GM12878 (cell line): ENCODE measurements at regions of chr18 and their contacts with region 1.

Region 1: GRCh38 chr18:77207540-77207939 is 42.1 kb upstream of the GALR1 start:
- DNase-seq: no peak
- ATAC-seq: peak; percentile 54
- H3K4me3 ChIP-seq: no peak overlapping the region
- H3K27ac ChIP-seq: no peak overlapping the region
- H3K4me1 ChIP-seq: peaks cover 4% of the 10 kb centered on the region
- H3K27me3 ChIP-seq: no peaks in the 10 kb centered on the region
- CTCF ChIP-seq: peak in 2 of 3 experiments; percentile 47 to 61; a peak in 4 of 6 replicates
- EP300 ChIP-seq: no peak
- POLR2A ChIP-seq: no peak
- RAD21 ChIP-seq: 0 out of 2 replicates have a peak, but pooled peaks have one; percentile 2

Region 2: DNA sequence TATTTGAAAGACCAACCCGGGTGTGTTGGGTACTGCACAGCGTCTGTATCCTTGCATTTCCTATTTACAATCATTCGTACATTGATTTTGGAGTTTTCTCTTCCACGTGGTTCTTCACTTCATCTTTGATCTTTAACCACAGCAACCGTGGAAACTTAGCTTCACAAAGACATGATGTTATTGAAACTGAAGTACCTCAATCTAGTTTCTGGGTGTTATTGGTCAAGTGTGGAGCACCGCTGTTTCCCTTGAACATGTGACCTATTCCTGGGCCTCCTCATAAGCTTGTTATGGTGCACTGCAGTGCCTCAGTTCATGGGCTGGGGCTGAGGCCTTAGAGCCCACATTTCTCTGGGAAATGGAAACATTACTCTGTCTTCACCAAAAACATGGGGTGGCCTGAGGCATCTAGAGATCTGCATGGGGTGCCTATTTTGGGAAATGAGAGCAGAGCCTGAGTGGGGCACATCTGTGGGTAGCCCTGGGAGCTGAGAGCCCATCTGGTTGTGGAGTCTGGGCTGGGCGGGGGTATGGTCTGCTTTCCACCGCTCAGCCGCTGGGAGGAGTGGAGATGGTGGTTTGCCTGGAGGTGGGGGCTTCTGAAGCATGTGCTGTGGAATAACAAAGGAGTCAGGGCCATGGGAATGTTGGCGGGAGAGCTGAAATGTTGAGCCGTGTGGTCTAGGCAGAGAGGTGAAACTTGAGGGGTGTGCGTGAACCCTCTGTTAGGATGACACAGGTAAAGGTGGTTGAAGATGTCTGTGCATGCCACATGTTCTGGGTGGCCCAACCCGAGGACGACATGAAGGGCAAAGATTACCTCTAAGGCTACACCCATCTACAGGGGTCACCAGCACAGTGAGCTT is 347.8 kb before region 1 on chr18:
- CTCF ChIA-PET with region 1: no interaction called
- POLR2A ChIA-PET with region 1: no interaction called
- RAD21 ChIA-PET with region 1: no interaction called
- SMC1A ChIA-PET with region 1: no interaction called
- in situ Hi-C with region 1: no loop called
- intact Hi-C with region 1: no loop called
- DNase-seq: peak; percentile 30
- ATAC-seq: peak; percentile 98
- H3K4me3 ChIP-seq: no peak overlapping the region
- H3K27ac ChIP-seq: peak overlapping the region; percentile 56
- H3K4me1 ChIP-seq: peaks cover 5% of the 10 kb centered on the region
- H3K27me3 ChIP-seq: no peaks in the 10 kb centered on the region
- CTCF ChIP-seq: no peak
- EP300 ChIP-seq: no peak
- POLR2A ChIP-seq: no peak
- RAD21 ChIP-seq: no peak

Region 3: DNA sequence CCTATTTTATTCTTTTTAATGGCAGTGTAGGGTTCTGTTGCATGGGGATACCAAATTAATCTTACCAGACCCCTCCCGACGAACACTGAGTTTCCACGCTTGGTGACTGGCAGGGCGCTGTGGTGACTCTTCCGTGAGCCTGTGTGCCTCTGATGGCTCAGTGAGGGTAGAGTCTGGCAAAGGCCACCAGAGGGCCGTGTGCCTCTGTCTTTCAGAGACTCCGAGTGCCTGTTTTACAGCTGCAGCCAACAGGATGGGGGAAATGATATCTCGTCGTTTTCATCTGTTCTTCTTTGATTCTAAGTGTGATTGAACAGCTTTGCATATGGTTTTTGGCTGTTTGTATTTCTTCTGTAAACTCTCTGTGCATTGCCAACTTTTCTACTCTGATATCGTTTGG is 285.4 kb before region 1 on chr18:
- CTCF ChIA-PET with region 1: interaction called, 15 read pairs
- POLR2A ChIA-PET with region 1: no interaction called
- RAD21 ChIA-PET with region 1: interaction called, 11 read pairs
- SMC1A ChIA-PET with region 1: interaction called, 9 read pairs
- in situ Hi-C with region 1: no loop called
- intact Hi-C with region 1: loop called (anchors 1 kb)
- DNase-seq: peak; percentile 26
- ATAC-seq: peak; percentile 100
- H3K4me3 ChIP-seq: no peak overlapping the region
- H3K27ac ChIP-seq: no peak overlapping the region
- H3K4me1 ChIP-seq: no peaks in the 10 kb centered on the region
- H3K27me3 ChIP-seq: no peaks in the 10 kb centered on the region
- CTCF ChIP-seq: peak; percentile 81 to 83 (median 81)
- EP300 ChIP-seq: peak in 1 of 2 experiments; percentile 12; a peak in 1 of 4 replicates
- POLR2A ChIP-seq: no peak
- RAD21 ChIP-seq: peak; percentile 92

Region 4: DNA sequence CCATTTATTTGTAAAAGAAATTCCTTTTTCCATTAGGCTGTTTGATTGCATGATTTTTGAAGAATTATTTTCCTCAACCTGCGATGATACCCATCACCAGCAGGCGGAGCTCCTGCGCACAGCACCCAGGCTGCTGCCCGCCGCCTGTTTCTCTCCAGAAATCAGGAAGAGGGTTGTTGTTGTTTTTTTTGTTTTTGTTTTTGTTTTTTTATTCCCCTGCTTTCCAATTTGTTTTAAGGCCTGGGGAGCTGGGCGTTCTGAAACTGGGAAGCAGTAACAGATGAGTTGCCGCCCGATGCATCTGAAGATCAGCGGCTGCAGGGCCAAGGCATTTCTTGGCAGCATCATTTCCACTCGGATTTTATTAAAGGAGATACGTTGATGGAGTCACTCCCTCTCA is 207.0 kb before region 1 on chr18:
- CTCF ChIA-PET with region 1: interaction called, 143 read pairs
- POLR2A ChIA-PET with region 1: interaction called, 3 read pairs
- RAD21 ChIA-PET with region 1: interaction called, 126 read pairs
- SMC1A ChIA-PET with region 1: interaction called, 82 read pairs
- in situ Hi-C with region 1: loop called (anchors 5 kb)
- intact Hi-C with region 1: loop called (anchors 1 kb)
- DNase-seq: no peak
- ATAC-seq: peak; percentile 69
- H3K4me3 ChIP-seq: no peak overlapping the region
- H3K27ac ChIP-seq: no peak overlapping the region
- H3K4me1 ChIP-seq: no peaks in the 10 kb centered on the region
- H3K27me3 ChIP-seq: no peaks in the 10 kb centered on the region
- CTCF ChIP-seq: peak; percentile 91 to 98 (median 97)
- EP300 ChIP-seq: no peak
- POLR2A ChIP-seq: no peak
- RAD21 ChIP-seq: peak; percentile 92

Region 5: GRCh38 chr18:77061946-77062517 is 145.5 kb before region 1 on chr18:
- CTCF ChIA-PET with region 1: interaction called, 37 read pairs
- POLR2A ChIA-PET with region 1: interaction called, 3 read pairs
- RAD21 ChIA-PET with region 1: interaction called, 13 read pairs
- SMC1A ChIA-PET with region 1: interaction called, 15 read pairs
- in situ Hi-C with region 1: no loop called
- intact Hi-C with region 1: loop called (anchors 2 kb)
- DNase-seq: no peak
- ATAC-seq: peak; percentile 65
- H3K4me3 ChIP-seq: peak overlapping the region; percentile 2; the same call in 1 of the 2 replicates
- H3K27ac ChIP-seq: peak overlapping the region; percentile 97
- H3K4me1 ChIP-seq: peaks cover 61% of the 10 kb centered on the region
- H3K27me3 ChIP-seq: no peaks in the 10 kb centered on the region
- CTCF ChIP-seq: peak in 2 of 3 experiments; percentile 16 to 26; a peak in 2 of 6 replicates
- EP300 ChIP-seq: no peak
- POLR2A ChIP-seq: no peak; the same call in 1 of the 2 replicates
- RAD21 ChIP-seq: peak; percentile 24; the same call in 1 of the 2 replicates

Region 6: DNA sequence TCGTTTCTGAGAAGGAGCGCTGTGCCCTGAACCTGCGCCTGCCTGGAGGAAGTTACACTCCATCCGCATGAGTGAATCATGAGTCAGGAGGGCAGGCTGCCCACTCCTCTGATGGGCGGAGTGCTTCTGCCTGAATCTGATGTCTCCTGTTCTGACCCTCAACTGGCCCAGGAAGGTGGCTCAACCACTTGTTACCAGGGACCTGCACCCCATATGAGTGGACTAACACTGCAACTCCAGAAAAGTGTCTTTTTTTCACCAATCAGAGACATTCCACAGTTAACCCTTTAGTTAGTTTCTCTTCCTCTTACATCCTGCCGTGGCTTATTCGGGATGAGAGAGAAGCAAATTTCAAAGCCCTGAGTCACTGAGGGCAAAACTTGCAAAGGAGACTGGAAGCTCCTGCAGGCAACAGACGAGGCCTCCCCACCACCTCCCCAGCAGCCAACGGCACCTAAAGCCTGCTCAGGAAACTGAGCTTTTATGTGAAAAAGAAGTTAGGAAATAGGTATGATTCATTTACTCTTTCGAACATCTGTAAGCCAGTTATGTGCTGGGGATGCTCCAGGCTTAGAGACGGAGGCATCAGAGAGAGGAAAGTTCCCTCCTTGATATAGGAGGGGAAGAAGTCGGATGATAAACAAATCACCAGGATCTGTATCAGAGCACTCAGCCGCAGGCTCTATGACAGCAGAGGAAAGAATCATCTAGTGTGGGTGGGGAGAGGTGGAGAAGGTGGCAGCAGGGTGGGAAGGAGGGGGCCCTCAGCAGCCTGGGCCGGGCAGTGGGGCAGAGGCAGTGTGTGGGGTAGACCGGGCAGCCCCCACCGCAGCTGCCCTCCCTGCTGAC is 105.9 kb before region 1 on chr18:
- CTCF ChIA-PET with region 1: interaction called, 10 read pairs
- POLR2A ChIA-PET with region 1: no interaction called
- RAD21 ChIA-PET with region 1: interaction called, 11 read pairs
- SMC1A ChIA-PET with region 1: interaction called, 4 read pairs
- in situ Hi-C with region 1: no loop called
- intact Hi-C with region 1: no loop called
- DNase-seq: peak; percentile 61
- ATAC-seq: peak; percentile 86
- H3K4me3 ChIP-seq: peak overlapping the region; percentile 56
- H3K27ac ChIP-seq: peak overlapping the region; percentile 99
- H3K4me1 ChIP-seq: peaks cover 80% of the 10 kb centered on the region
- H3K27me3 ChIP-seq: no peaks in the 10 kb centered on the region
- CTCF ChIP-seq: no peak
- EP300 ChIP-seq: 0 out of 4 replicates have a peak, but pooled peaks of 1 of the 2 experiments have one; percentile 52
- POLR2A ChIP-seq: peak; percentile 56
- RAD21 ChIP-seq: no peak

Region 7: DNA sequence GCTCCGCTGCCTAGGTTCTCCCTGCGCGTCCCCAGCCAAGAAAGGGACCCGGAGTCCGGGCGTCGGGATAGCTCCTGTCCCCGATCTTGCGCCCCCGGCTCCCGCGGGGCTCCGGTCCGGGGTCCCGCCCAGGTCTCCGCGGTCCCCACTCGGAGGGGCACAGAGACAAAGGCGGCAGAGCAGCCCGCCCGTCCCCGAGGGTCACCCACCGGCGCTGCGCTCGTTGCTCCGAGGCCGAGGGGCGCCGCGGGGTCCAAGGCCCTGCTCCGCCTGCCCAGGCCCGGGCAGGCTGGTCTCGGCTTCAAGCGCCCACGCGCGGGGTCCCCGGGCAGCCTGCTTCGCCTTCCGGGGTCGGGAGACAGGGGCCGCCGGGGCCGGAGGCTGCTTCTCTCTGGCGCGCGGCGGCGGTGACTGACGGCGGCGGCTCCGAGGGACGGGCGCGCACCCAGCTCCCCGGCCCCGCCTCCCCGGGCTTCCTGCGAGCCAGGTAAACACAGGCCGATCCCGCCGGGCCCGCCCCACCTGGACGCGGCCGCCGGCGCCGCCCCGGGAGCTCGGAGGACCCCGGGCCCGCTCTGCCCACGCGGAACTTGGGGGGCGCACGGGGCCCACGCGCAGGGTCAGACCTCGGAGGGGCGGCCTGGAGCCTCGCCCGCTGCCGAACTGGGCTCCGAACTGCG is 75.0 kb before region 1 on chr18 and contains the start of gene MBP:
- CTCF ChIA-PET with region 1: interaction called, 13 read pairs
- POLR2A ChIA-PET with region 1: interaction called, 5 read pairs
- RAD21 ChIA-PET with region 1: interaction called, 10 read pairs
- SMC1A ChIA-PET with region 1: interaction called, 16 read pairs
- in situ Hi-C with region 1: no loop called
- intact Hi-C with region 1: no loop called
- DNase-seq: no peak
- ATAC-seq: peak; percentile 67
- H3K4me3 ChIP-seq: peak within 1 kb of the TSS; percentile 98
- H3K27ac ChIP-seq: peak within 1 kb of the TSS; percentile 97
- H3K4me1 ChIP-seq: peaks cover 33% of the 10 kb centered on the region
- H3K27me3 ChIP-seq: no peaks in the 10 kb centered on the region
- CTCF ChIP-seq: no peak
- EP300 ChIP-seq: no peak
- POLR2A ChIP-seq: peak; percentile 82
- RAD21 ChIP-seq: no peak
- polyA plus RNA-seq, gene MBP: 12.2 to 13.3 TPM

Region 8: GRCh38 chr18:77197073-77197472 is 10.5 kb before region 1 on chr18:
- CTCF ChIA-PET with region 1: interaction called, 19 read pairs
- POLR2A ChIA-PET with region 1: no interaction called
- RAD21 ChIA-PET with region 1: interaction called, 11 read pairs
- SMC1A ChIA-PET with region 1: interaction called, 7 read pairs
- in situ Hi-C with region 1: no loop called
- intact Hi-C with region 1: no loop called
- DNase-seq: no peak
- ATAC-seq: 0 out of 3 replicates have a peak, but pooled peaks have one; percentile 33
- H3K4me3 ChIP-seq: no peak overlapping the region
- H3K27ac ChIP-seq: no peak overlapping the region
- H3K4me1 ChIP-seq: no peaks in the 10 kb centered on the region; the same call in 1 of the 2 replicates
- H3K27me3 ChIP-seq: no peaks in the 10 kb centered on the region
- CTCF ChIP-seq: peak; percentile 27 to 35 (median 28); a peak in 4 of 6 replicates
- EP300 ChIP-seq: no peak
- POLR2A ChIP-seq: no peak
- RAD21 ChIP-seq: peak; percentile 33; the same call in 1 of the 2 replicates

Region 9: DNA sequence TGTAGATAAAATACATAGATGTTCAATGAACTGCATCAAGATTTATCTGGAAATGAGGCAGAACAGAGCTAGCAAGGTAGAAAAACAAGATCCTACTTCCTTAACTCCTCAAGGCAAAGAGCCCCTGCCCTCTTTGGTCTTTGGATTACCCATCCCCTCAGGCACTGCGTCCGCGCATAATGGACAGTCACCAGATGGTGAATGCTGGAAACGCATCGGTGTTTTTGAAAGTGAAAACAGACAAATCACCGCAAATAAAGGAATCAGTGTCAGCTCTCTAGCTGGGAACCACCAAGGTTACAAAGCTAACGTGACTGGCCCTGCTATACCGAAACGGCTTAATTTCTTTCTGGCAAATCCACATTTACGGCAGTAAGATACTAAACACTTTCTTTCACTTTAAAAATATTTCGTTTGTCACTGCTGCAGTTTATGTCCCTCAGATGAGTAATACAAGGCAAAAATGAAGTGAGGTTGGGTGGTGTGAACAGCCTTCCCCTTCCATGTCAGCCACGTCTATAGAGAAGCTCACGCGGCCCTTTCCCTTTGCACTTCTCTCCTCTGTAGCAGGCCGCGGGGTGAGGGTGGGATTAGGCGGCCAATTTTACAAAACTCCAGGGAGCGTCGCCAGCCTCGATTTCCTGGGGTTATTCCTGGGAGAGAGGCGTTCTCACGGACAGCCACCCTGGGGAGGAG is 41.5 kb after region 1 on chr18:
- CTCF ChIA-PET with region 1: no interaction called
- POLR2A ChIA-PET with region 1: no interaction called
- RAD21 ChIA-PET with region 1: no interaction called
- SMC1A ChIA-PET with region 1: no interaction called
- in situ Hi-C with region 1: no loop called
- intact Hi-C with region 1: no loop called
- DNase-seq: no peak
- ATAC-seq: no peak
- H3K4me3 ChIP-seq: no peak overlapping the region
- H3K27ac ChIP-seq: no peak overlapping the region
- H3K4me1 ChIP-seq: no peaks in the 10 kb centered on the region
- H3K27me3 ChIP-seq: no peaks in the 10 kb centered on the region; a peak in 2 of 4 replicates
- CTCF ChIP-seq: no peak
- EP300 ChIP-seq: no peak
- POLR2A ChIP-seq: no peak
- RAD21 ChIP-seq: no peak